ENCODE measurements at regions of chr15 and their contacts with region 1.

Region 1: DNA sequence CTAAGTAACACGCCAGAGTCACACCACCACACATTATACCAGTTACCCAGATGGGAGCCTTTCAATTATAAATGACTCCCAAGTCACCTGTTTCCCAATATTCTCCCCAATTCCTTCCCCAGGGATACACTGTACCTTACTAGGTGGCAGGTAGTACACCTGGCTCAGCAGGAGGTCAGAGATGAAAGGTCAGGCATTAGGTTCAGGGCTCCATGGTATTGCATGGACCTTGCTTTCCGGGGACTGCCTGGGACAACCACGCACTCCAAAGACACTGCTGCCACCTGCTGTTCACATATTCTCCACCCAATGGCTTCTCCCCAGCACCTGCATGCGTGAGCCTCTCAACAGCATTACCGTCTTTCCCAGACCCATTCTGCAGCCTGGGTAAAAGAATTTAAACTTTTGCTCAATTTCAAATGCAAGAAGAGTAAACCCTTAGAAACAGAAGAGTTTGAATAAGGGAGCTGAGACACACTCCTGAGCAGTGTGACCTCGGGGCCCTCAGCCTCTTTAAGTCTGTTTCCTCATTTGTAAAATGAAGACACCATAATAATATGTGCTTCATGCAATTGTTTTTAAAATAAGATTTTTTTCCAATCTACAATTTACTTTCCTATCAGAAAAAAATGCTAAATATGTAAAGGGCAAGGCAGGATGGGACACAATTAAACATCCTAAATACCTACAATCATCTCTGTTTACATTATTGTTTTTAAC is 28.0 kb upstream of the LACTB start:
- DNase-seq: peak; percentile 85 to 86
- H3K4me3 ChIP-seq: no peak overlapping the region
- H3K27ac ChIP-seq: no peak overlapping the region
- H3K4me1 ChIP-seq: peaks cover 0 to 22% (median 9%) of the 10 kb centered on the region in 4 donors
- H3K27me3 ChIP-seq: no peaks in the 10 kb centered on the region
- CTCF ChIP-seq: peak; percentile 85 to 89

Region 2: DNA sequence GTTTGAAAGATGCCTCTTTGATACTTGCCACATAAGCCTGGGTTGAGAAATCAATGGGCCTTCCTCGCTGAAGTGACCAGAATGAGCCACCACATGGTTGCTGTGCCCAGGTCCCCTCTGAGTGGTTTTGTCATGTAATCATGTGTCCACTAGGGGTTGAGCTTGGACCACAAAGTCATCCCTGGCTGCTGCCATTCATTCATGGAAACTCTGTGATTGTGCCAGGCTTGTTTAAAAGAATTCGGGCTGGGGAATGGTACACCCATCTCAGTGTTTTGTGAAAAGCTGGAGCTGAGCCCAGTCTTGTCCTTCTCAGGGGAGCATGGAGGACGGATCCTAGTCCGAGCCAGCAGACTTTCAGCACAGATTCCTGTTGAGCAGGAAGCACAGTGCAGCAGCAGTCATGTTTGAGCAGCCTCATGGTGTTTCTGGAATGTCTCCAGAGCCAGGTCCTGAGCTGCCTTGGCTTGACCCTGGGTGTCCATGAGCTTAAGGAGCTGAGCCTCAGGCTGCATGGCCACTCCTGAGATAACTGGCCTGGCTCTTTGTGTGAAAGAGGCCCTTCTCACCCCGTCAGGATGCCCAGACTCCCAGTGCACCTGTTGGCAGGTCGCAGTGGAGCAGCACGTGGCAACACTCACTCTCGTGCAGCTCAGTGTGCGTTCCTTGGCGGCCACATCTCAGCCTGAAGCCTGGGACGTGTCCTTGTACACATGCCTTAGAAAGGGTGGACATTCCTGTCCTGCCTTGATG is 311.4 kb before region 1 on chr15:
- intact Hi-C with region 1: loop called (anchors 5 kb)
- DNase-seq: peak; percentile 83 to 93
- H3K4me3 ChIP-seq: no peak overlapping the region
- H3K27ac ChIP-seq: peak overlapping the region in 1 of 2 donors; percentile 32
- H3K4me1 ChIP-seq: peaks cover 0 to 8% (median 6%) of the 10 kb centered on the region in 4 donors
- H3K27me3 ChIP-seq: no peaks in the 10 kb centered on the region
- CTCF ChIP-seq: peak; percentile 57 to 86

Region 3: DNA sequence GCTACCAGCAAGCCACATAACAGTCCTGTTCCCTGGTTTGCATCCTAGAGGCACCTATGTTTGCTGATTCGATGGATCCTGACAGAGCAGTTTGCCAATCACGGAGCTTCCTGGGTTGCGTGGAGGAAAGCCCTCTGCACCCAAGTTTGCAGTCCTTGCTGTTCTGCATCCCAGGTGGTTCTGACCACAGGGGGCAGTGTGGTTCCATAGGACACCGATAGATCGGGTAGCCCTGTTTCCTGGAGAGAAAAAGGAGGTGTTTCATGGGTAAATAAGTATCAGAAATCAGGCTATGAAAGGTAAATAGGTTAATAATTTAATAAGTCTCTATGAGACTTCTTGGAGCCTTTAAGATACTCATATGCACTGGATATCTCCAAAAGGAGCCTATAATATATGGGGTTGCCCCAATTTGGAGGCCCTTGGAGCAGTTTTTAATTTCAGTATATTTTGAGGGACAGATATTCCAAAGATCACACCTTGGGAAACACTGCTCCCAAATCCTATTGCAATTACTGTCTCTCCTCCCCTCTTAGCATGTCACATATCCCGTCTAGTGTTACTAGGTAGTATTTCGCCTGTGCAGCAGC is 245.7 kb before region 1 on chr15:
- intact Hi-C with region 1: loop called (anchors 2 kb)
- DNase-seq: peak in 1 of 2 donors; percentile 74
- H3K4me3 ChIP-seq: no peak overlapping the region
- H3K27ac ChIP-seq: no peak overlapping the region
- H3K4me1 ChIP-seq: peaks cover 0 to 25% (median 8%) of the 10 kb centered on the region in 4 donors
- H3K27me3 ChIP-seq: no peaks in the 10 kb centered on the region
- CTCF ChIP-seq: peak; percentile 59 to 71

Region 4: DNA sequence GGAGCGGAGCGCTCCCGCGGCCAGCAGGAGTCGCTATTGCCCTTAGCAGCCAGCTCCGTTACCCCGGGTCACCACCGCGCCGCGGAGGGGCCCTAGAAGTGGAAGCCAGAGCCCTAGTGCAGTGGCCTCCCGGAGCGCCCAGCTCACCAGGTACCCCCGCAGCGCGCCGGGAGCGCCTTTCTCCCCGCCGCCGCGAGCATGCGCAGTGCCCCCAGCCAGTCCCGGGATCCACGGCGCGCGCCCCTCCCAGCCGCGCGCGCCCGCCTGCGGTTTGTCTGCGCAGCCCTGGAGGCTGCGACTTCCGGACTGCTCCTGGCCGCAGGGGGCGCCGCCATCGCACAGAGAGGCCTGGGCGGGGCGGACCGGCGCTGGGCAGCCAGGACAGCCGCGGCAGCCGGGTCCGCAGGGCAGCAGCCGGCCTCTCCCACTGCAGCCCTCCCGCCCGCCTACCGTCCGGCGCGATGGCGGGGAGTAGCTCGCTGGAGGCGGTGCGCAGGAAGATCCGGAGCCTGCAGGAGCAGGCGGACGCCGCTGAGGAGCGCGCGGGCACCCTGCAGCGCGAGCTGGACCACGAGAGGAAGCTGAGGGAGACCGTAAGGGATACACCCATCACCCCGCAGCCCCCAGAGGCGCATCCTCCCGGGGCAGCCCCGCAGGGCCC is 45.4 kb before region 1 on chr15:
- intact Hi-C with region 1: loop called (anchors 5 kb)
- DNase-seq: peak; percentile 90 to 95
- H3K4me3 ChIP-seq: peak overlapping the region; percentile 90 to 95
- H3K27ac ChIP-seq: peak overlapping the region; percentile 93 to 97
- H3K4me1 ChIP-seq: peaks cover 0 to 65% (median 49%) of the 10 kb centered on the region in 4 donors
- H3K27me3 ChIP-seq: no peaks in the 10 kb centered on the region
- CTCF ChIP-seq: peak; percentile 94

Measured in tibial artery (tissue), 4 donors.